Activated T-helper 1 cell treated with anti-CD3 and anti-CD28 coated beads, Interleukin-12 subunit alpha, Interleukin-12 subunit beta, Interleukin-2, Interleukin-4 antibody, amounts not matched to agents 30 ng/mL and 10 ng/mL and 1 ng/mL, durations not matched to agents 14 hours and 24 hours and 36 hours (primary cell): ENCODE measurements at regions of chr21 and their contacts with region 1.

Region 1: DNA sequence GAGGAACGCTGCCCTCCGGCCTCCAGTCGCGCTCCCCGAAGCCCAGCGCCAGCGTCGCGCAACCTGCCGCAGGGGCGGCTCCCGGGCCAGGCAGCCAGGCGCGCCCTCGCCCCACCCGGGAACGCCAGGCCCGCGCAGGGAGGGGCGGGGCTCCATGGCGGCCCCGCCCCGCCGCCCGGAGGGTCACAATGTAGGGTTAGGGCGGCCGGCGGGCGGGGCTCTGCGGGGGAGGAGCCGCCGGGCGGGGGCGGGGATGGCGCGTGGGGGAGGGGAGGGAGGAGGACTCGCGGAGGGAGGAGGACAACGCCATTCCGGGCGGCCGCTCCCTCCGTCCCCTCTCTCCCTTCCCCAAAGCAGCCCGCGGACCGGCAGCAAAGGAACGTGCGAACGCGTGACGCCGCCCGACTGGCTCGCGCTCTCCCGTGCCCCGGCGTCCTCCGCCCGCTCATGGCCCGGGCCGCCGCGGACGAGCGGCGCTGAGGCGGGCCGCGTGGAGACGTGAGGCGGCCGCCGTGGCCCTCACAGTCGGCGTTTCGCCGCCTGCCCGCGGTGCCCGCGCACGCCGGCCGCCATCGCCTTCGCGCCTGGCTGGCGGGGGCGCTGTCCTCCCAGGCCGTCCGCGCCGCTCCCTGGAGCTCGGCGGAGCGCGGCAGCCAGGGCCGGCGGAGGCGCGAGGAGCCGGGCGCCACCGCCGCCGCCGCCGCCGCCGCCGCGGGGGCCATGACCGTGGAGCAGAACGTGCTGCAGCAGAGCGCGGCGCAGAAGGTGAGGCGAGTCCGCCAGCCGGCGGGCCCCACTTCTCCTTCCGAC is at the start of gene USP25:
- DNase-seq: peak; percentile 80
- H3K4me3 Mint-ChIP-seq: peak within 1 kb of the TSS; percentile 93
- H3K27ac Mint-ChIP-seq: peak within 1 kb of the TSS; percentile 91
- H3K4me1 Mint-ChIP-seq: peaks cover 40% of the 10 kb centered on the region
- H3K27me3 Mint-ChIP-seq: peaks cover 31% of the 10 kb centered on the region
- total RNA-seq, gene USP25: 25.6 and 26.8 TPM in 2 replicates

Region 2: DNA sequence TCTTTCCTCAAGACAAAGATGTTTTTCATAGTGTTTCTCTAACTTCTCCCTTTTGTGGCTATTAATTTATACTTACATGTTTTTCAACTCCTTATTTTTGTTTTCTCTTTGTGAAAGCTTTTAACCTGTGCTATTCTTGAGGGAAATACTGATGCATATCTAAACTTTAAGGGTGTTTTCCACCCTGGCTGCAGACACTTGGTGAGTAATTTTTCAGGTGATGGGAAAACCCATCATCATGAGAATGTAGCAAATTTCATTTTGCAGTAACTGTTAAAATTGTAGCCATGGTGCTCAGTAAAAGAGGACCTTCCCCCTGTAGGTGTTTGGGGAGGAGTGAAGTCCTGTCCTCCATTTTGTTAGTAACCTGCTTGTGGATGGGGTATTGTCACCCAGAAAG is 1643.3 kb before region 1 on chr21:
- intact Hi-C with region 1: loop called (anchors 5 kb)
- DNase-seq: no peak
- H3K4me3 Mint-ChIP-seq: no peak overlapping the region
- H3K27ac Mint-ChIP-seq: peak overlapping the region; percentile 90
- H3K4me1 Mint-ChIP-seq: peaks cover 33% of the 10 kb centered on the region
- H3K27me3 Mint-ChIP-seq: no peaks in the 10 kb centered on the region

Region 3: DNA sequence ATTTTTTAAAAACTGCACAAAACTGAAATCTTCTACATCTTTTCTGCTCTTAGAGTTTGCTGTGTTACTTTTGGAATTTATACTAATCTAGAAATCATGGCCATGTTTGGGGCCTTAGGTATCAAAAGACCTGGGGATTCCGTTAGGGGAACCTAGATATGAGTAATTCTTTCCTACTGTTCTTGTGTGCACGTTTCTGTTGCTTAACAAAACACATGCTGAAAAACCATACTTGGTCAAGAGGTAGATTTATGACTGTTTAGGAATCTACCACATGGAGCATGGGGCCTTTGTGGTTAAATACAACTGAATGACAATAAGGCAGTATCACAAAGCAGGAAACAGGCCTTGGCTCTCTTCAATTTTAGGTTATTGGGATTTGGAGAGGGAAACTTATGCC is 292.0 kb before region 1 on chr21:
- intact Hi-C with region 1: loop called (anchors 5 kb)
- DNase-seq: no peak
- H3K4me3 Mint-ChIP-seq: no peak overlapping the region
- H3K27ac Mint-ChIP-seq: peak overlapping the region; percentile 34
- H3K4me1 Mint-ChIP-seq: peaks cover 12% of the 10 kb centered on the region
- H3K27me3 Mint-ChIP-seq: no peaks in the 10 kb centered on the region

Region 4: GRCh38 chr21:15706692-15707091 is 23.2 kb before region 1 on chr21:
- intact Hi-C with region 1: no loop called
- DNase-seq: no peak
- H3K4me3 Mint-ChIP-seq: no peak overlapping the region
- H3K27ac Mint-ChIP-seq: no peak overlapping the region
- H3K4me1 Mint-ChIP-seq: no peaks in the 10 kb centered on the region
- H3K27me3 Mint-ChIP-seq: peaks cover 7% of the 10 kb centered on the region

Region 5: DNA sequence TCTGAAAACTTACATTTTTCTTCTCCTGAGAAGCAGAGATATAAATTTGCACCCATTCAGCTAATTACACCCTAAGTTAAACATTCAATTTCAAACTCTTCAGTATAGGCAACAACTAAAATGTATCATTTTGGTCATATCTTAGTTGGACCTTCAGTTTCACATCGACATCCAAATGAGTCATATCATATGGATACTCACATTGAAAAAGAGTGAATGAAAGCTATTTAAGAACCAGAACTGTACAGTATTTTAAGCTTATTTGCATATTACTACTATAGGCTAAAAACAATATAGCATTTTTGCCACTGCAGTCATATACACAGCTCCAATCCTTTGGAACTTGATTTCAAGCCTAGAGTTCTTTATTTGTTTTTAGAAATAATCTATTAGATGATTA is 33.5 kb after region 1 on chr21:
- intact Hi-C with region 1: loop called (anchors 1 kb)
- DNase-seq: no peak
- H3K4me3 Mint-ChIP-seq: no peak overlapping the region
- H3K27ac Mint-ChIP-seq: no peak overlapping the region
- H3K4me1 Mint-ChIP-seq: peaks cover 10% of the 10 kb centered on the region
- H3K27me3 Mint-ChIP-seq: no peaks in the 10 kb centered on the region

Region 6: DNA sequence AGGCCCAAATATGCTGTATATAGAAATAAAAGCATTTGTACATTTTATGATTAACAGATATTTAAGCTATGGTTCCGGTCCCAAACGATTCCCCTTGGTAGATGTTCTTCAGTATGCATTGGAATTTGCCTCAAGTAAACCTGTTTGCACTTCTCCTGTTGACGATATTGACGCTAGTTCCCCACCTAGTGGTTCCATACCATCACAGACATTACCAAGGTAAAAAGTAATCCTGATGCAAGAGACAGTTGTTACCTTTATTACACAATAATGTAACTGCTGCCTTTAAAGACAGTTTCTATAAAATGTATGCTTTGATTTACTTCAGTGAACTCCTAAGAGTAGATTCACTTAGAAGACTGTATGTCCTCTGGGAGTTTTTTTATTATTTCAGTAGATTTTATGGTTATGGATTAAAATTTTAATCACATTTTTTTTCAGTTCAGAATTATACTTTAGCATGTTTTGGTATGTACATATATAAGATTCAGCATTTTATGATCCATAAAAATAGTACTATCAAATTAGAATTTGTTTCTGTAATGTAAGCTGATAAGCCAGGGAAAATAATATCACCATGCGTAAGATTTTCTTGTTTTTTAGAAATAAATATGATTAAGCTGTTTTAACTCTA is 96.4 kb after region 1 on chr21:
- intact Hi-C with region 1: loop called (anchors 1 kb)
- DNase-seq: peak; percentile 8
- H3K4me3 Mint-ChIP-seq: no peak overlapping the region
- H3K27ac Mint-ChIP-seq: peak overlapping the region; percentile 59
- H3K4me1 Mint-ChIP-seq: peaks cover 21% of the 10 kb centered on the region
- H3K27me3 Mint-ChIP-seq: no peaks in the 10 kb centered on the region